Activated CD4-positive, alpha-beta memory T cell treated with anti-CD3 and anti-CD28 coated beads for 36 hours (primary cell): ENCODE measurements at regions of chr18 and their contacts with region 1.

Region 1: DNA sequence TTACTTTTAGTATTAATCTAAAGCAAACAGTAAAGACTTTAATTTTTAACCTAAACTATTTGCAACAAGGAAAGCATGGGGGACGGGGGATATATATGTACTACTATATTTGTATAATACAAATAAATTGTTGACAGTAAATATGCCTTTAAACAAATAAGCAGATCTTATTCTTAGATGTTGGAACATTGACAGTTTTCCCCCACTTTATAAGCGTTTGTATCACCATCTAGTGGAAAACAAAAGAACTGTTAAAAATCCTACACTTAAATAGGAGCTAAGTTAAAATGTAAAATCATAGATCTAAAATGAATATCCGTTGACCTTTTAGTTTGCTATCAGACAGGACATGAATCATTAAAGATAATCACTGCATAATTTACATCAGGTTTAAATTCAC is 50.0 kb downstream of the RBBP8 start:
- DNase-seq: no peak
- H3K4me3 Mint-ChIP-seq: no peak overlapping the region
- H3K27ac Mint-ChIP-seq: no peak overlapping the region
- H3K4me1 Mint-ChIP-seq: peaks cover 8% of the 10 kb centered on the region
- H3K27me3 Mint-ChIP-seq: no peaks in the 10 kb centered on the region

Region 2: DNA sequence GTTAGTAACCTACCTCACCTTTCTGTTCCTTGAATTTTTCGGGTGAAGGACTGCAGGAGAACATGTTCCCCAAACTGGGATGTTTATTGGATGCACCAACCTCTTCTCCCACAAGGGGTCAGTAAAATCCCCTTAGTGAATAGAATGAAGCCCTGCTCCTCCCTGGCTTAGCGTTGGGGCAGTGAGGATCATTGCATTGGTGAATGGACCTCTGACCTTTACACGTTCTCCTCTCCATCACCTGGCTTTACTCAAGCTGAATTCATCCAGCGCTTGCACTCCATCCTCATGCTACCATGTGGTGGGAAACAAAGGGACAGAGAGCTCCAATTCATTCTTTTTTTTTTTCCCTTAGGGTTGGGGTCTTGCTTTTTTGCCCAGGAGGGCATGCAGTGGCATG is 1085.4 kb before region 1 on chr18:
- CTCF ChIA-PET with region 1: no interaction called
- POLR2A ChIA-PET with region 1: no interaction called
- intact Hi-C with region 1: no loop called
- DNase-seq: peak; percentile 19
- H3K4me3 Mint-ChIP-seq: no peak overlapping the region
- H3K27ac Mint-ChIP-seq: no peak overlapping the region
- H3K4me1 Mint-ChIP-seq: peaks cover 3% of the 10 kb centered on the region
- H3K27me3 Mint-ChIP-seq: peaks cover 14% of the 10 kb centered on the region

Region 3: GRCh38 chr18:22813648-22814328 is 169.4 kb before region 1 on chr18:
- CTCF ChIA-PET with region 1: interaction called, 11 read pairs
- POLR2A ChIA-PET with region 1: no interaction called
- intact Hi-C with region 1: loop called (anchors 5 kb)
- DNase-seq: no peak
- H3K4me3 Mint-ChIP-seq: no peak overlapping the region
- H3K27ac Mint-ChIP-seq: no peak overlapping the region
- H3K4me1 Mint-ChIP-seq: no peaks in the 10 kb centered on the region
- H3K27me3 Mint-ChIP-seq: peaks cover 19% of the 10 kb centered on the region

Region 4: GRCh38 chr18:22952525-22952924 is 30.6 kb before region 1 on chr18:
- CTCF ChIA-PET with region 1: interaction called, 11 read pairs
- POLR2A ChIA-PET with region 1: no interaction called
- intact Hi-C with region 1: no loop called
- DNase-seq: no peak
- H3K4me3 Mint-ChIP-seq: no peak overlapping the region
- H3K27ac Mint-ChIP-seq: no peak overlapping the region
- H3K4me1 Mint-ChIP-seq: peaks cover 7% of the 10 kb centered on the region
- H3K27me3 Mint-ChIP-seq: no peaks in the 10 kb centered on the region

Region 5: DNA sequence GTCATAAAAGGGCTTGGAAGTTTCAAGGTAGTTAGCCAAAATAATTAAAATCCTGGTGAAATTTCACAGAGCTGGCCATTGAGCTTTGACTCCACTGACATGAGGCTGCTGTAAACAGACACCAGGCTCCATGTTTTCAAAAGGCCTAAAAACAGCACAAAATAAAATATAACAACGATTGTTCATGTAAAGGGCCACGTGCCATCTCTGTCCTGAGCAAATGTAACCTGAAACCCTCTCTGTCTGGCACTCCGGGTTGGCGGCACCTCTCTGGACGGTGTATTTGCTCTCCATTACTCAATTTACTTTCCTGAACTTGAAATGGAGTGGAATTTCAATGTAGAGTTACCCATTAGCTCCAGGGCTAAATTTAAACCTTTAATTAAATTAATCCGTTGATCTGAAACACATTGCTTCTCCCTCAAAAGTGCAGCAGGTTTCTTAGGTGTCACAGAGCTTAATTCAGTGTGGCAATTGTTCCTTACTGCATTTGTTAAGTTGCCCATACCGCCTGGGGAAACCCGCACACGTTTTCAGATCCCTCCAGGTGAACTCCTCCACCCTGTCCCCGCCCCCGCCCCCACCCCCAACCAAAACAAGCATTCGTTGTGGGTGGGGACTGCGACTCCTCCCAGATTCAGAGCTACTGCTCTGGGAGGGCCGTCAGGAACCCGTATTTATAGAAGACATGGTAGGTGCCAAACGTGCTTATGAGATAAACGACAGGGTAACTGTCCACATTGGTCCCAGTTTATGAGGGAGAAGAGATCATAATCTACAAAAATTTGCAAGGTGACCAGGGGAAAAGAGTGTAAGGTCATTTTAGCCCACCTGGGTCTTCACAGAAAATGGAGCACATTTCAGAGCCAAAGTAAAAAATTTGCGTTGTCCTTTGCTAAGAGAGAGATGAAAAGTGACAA is 150.9 kb after region 1 on chr18:
- CTCF ChIA-PET with region 1: no interaction called
- POLR2A ChIA-PET with region 1: no interaction called
- intact Hi-C with region 1: no loop called
- DNase-seq: peak; percentile 54
- H3K4me3 Mint-ChIP-seq: peak overlapping the region; percentile 64
- H3K27ac Mint-ChIP-seq: no peak overlapping the region
- H3K4me1 Mint-ChIP-seq: peaks cover 14% of the 10 kb centered on the region
- H3K27me3 Mint-ChIP-seq: peaks cover 40% of the 10 kb centered on the region